ENCODE measurements at regions of chr4 and their contacts with region 1.

Region 1: DNA sequence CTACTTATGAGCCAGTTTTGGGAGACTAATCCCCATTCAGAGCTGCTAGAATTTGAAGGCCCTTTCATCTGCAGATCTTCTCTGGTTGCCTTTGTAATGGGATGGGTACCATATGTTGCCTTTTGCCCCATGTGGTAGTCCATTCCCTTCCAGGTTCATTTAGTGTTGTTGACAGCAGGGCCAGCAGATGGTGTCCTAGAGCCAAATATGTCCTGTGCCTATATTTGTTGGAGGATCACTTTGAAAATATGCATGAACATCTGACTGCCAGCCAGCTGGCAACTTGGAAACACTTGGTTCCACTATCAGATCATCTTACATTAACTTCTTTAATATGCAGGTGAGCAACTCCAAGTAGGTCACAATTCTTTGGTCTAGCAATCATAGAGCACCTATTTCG is 30.4 kb downstream of the CFAP299 start:
- DNase-seq: no peak
- ATAC-seq: peak; percentile 48

Region 2: DNA sequence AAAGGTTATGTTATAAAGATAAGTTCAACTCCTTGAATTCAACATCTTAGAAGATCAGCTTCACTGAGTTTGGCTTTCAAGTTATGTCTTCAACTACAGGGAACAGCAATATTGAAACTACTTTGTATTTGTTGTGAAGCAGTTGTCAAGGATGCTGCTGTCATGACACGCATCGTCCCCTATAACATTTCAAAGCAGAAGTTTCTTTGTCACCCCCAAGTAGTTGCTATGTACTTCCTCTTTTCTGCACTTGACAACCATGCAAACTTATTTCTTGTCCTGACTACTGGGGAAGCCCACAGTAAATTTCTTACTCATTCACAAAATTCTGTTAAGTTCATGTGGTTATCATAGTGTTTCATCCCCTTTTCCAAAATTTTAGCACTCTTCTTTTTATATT is 307.2 kb before region 1 on chr4:
- intact Hi-C with region 1: no loop called
- DNase-seq: no peak
- ATAC-seq: peak; percentile 73

Region 3: DNA sequence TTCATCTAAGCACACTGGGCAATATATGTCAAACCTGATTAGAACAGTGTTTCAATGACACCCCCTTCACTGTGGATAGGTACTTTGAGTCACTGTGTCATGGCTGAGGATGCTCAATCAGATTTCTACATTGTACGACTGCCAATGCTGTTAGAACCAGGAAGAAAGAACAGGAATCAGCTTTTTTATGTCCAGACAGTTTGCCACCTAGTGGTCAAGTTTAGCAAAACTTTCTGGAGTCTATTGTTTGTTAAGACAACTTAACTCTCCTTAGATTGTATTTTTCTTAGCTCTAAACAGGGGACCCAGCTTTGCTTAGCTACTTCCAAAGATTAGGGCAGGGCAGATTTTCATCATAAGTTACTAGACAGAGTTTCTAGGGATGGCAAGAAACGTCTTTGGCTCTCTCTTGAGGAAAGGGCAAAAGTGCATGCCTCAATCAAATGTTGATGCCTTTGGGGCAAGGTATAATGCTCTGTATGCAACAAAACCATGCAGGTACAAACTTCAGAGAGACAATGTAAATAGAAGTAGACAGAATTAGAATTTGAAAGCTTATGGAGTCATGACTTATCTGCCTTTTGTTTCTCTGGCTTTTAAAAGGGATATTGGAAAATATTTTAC is 624.1 kb after region 1 on chr4:
- intact Hi-C with region 1: loop called (anchors 5 kb)
- DNase-seq: no peak
- ATAC-seq: no peak

Region 4: DNA sequence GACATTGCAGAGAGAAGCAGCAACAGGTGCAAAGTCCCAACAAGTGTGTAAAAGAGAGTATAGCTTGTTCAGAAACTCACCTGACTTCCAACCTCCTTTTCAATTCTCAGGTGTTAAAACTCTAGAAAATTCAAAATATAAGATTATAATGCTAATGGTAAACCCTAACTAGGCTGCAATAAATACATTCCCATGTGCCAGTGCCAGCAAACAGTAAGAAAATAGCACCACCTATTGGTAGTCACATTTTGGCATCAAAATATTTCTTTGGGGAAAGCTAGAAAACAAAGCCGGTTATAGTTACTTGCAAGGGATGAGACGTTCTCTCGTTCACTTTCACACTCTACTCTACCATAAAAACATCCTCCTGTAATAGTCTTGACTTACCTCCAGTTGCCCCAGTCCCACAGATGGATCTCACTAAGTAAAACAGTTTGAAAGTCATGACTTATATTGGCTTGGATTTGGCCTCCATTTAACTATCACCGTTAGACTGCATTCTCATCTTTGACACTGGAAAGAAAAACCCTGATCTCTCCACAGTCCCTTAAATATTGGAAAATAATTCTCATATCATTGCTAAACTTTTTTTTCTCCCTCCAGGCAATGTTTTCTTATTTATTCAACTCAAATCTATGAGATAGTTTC is 674.2 kb after region 1 on chr4:
- intact Hi-C with region 1: loop called (anchors 5 kb)
- DNase-seq: no peak
- ATAC-seq: no peak

Region 5: GRCh38 chr4:81052119-81053068 is 686.5 kb after region 1 on chr4:
- intact Hi-C with region 1: loop called (anchors 5 kb)
- DNase-seq: no peak
- ATAC-seq: no peak

Region 6: GRCh38 chr4:81197864-81198524 is 832.1 kb after region 1 on chr4:
- intact Hi-C with region 1: no loop called
- DNase-seq: no peak
- ATAC-seq: no peak

Measured in Right ventricle myocardium inferior (tissue), 1 donor.